Esophagus squamous epithelium (tissue), 5 donors: ENCODE measurements at regions of chr12 and their contacts with region 1.

Region 1: GRCh38 chr12:14845350-14845750 is 2.0 kb upstream of the ART4 start:
- DNase-seq: no peak
- H3K4me3 ChIP-seq: no peak overlapping the region
- H3K27ac ChIP-seq: peak overlapping the region in 1 of 4 donors; percentile 1
- H3K4me1 ChIP-seq: peaks cover 0 to 46% (median 29%) of the 10 kb centered on the region in 3 donors
- H3K27me3 ChIP-seq: no peaks in the 10 kb centered on the region
- CTCF ChIP-seq: peak; percentile 52 to 87 (median 78)
- POLR2A ChIP-seq: no peak

Region 2: GRCh38 chr12:14995583-14996425 is 150.5 kb after region 1 on chr12:
- intact Hi-C with region 1: loop called (anchors 5 kb)
- DNase-seq: no peak
- H3K4me3 ChIP-seq: no peak overlapping the region
- H3K27ac ChIP-seq: no peak overlapping the region
- H3K4me1 ChIP-seq: peaks cover 3 to 25% (median 4%) of the 10 kb centered on the region in 3 donors
- H3K27me3 ChIP-seq: no peaks in the 10 kb centered on the region
- CTCF ChIP-seq: peak; percentile 39 to 74 (median 66)
- POLR2A ChIP-seq: no peak